Activated CD8-positive, alpha-beta T cell treated with anti-CD3 and anti-CD28 coated beads for 36 hours (primary cell): ENCODE measurements at regions of chr14 and their contacts with region 1.

Region 1: DNA sequence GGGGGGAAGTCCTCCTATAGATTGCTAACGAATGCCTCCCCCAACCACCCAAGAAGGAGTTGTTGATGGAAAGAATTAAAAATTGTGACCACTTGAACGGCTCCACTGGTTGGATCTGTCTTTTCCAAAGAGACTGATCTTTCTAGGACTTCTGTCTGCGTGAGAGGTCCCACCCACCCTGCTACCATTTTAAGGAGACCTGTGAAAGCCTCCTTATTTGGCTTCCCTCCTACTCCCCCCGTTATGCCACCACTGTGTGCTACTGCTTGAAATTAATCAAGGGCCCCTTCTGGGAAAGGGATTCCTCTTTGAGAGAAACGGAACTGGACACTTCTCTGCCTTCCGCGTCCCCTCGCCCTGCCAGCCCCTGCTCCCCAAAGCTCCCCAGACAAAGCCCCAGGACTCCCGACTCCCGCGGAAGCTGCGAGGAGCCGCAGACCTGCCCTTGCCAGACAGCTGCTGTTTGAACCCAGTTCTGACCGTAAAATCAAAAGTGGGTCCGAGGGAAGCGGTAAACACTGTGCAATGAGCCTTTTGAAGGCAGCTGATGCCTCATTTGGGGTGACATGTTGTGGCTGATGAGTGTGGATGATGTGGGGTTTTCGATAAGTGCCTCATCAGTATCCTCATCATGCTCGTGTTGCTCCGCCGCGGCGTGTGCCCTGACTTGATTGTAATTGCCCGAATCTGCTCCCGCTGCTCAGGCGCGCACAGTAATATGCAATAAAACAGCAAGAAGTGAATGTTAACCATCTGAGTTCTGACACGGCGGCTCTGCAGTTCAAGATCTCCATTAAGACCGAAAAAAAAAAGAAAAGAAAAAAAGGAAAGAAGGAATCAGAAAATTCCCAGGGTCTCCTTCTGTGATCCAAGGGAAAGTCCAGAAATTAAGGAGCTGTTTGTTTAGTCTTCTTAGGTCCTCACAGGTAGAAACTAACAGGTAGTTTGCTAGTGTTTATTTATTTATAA is 48.2 kb downstream of the MBIP start:
- DNase-seq: peak; percentile 42
- ATAC-seq: peak; percentile 70
- H3K4me3 Mint-ChIP-seq: peak overlapping the region; percentile 52
- H3K27ac Mint-ChIP-seq: no peak overlapping the region
- H3K4me1 Mint-ChIP-seq: peaks cover 10% of the 10 kb centered on the region
- H3K27me3 Mint-ChIP-seq: peaks cover 46% of the 10 kb centered on the region
- CTCF ChIP-seq: no peak

Region 2: DNA sequence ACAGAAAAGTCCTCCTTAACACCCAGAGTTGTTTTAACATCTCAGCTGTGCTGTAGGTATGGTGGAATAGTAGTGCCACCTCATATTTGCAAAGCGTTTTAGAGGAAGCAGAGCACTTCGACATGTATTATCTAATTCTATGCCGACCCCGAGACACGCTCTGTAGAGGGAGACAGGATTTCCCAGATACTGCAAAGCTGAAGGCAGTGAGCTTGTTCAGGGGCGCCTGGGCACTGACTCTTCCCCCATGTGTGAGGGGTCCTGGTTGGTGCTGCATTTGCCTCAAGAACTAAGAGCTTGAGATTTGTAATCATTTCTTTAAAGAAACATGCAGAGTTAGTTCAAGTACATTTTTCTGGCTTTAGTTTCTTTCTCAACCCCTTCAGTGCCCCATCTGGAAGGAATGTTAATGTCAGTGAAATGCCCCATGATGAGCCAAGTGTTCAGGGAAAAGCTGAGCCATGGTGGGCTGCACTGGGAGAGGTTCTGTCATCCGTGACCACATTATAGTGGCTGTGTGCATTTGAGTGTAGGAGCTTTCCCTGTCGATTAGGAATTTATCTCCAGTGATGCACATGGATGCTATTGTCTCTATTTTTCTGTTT is 18.1 kb before region 1 on chr14:
- CTCF ChIA-PET with region 1: no interaction called
- POLR2A ChIA-PET with region 1: no interaction called
- intact Hi-C with region 1: no loop called
- DNase-seq: no peak
- ATAC-seq: no peak
- H3K4me3 Mint-ChIP-seq: no peak overlapping the region
- H3K27ac Mint-ChIP-seq: no peak overlapping the region
- H3K4me1 Mint-ChIP-seq: no peaks in the 10 kb centered on the region
- H3K27me3 Mint-ChIP-seq: peaks cover 4% of the 10 kb centered on the region
- CTCF ChIP-seq: no peak

Region 3: DNA sequence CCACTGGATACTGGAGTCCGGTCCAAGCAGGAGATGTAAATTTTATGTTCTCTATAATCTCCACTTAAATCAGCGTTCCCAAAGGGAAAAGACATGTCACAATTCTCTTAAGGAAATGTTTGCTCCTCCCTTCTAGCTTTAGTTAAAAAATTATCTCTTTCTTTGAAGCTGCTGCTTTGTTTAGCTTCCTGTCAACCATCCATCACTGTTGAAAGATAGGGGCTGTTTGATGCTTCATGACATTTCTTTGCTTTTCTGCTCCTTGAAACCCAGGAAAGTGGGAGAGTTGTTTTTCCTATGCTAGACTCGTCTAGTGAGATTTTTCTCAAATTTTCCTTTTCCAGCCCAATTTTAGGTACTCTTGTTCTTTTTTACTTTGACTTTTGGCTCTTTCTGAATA is 16.3 kb after region 1 on chr14:
- CTCF ChIA-PET with region 1: no interaction called
- POLR2A ChIA-PET with region 1: no interaction called
- intact Hi-C with region 1: no loop called
- DNase-seq: no peak
- ATAC-seq: no peak
- H3K4me3 Mint-ChIP-seq: no peak overlapping the region
- H3K27ac Mint-ChIP-seq: no peak overlapping the region
- H3K4me1 Mint-ChIP-seq: no peaks in the 10 kb centered on the region
- H3K27me3 Mint-ChIP-seq: peaks cover 5% of the 10 kb centered on the region
- CTCF ChIP-seq: no peak

Region 4: DNA sequence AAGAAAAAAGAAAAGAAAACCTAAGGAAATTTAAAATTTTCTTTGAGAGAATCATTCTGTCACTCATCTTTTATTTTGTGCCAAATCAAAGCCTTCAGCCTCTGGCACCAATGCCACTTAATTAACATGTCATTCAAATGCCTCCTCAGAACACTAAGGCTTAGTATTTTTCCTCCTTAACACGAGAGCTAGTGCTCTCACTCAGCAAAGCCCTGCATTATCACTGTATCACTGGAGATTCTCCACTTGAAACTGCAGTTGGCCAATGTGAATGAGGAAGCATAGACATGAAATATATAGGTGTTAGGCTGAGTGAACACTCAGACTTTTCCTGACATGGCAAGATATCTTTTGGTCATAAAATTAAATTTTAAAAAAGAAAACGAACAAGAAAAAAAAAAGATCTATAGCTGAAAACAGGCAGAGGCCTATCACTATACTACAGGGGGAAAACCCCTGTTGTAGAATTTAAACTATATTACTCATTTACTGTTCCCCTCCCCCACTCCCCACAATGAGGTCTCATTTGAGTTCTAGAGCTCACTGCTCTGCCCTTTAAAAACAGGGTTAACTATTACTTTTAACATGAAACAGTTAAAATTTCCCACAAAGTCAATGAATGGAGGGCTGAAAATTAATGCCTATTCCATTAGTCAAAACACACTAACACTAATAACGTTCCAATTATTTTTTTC is 43.1 kb after region 1 on chr14:
- CTCF ChIA-PET with region 1: no interaction called
- POLR2A ChIA-PET with region 1: no interaction called
- intact Hi-C with region 1: loop called (anchors 5 kb)
- DNase-seq: peak; percentile 83
- ATAC-seq: peak; percentile 85
- H3K4me3 Mint-ChIP-seq: peak overlapping the region; percentile 33
- H3K27ac Mint-ChIP-seq: peak overlapping the region; percentile 96
- H3K4me1 Mint-ChIP-seq: peaks cover 43% of the 10 kb centered on the region
- H3K27me3 Mint-ChIP-seq: no peaks in the 10 kb centered on the region
- CTCF ChIP-seq: no peak

Region 5: DNA sequence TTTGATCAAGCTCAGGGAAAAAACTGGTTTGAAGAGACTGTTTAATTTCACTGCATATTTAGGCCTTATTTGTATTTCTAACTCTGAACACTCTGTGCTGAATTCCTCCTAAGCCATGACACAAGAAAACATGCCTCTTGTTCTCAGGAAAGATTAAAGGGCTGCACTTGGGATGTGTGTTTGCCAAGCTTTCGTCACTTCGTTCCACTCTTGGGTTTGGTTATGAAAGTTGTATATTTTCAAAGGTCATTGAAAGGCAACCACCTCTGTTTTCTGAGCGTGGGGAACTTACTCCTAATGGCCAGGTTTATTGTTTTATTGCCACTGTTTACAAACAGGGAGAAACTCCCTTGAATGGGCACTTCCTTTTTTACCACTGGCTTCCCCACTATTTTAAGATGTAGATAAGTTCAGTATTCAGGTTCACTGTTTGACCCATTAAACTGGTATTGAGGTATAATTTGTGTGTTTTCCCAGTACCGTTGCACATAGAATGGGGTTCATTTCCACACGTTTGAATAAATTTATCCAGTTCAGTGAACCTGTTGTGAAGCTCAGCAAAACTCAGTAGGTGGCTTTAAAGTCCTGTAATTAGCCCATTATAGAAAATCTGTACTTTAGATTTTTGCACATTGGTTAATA is 182.5 kb after region 1 on chr14:
- CTCF ChIA-PET with region 1: no interaction called
- POLR2A ChIA-PET with region 1: no interaction called
- intact Hi-C with region 1: no loop called
- DNase-seq: no peak
- ATAC-seq: no peak
- H3K4me3 Mint-ChIP-seq: no peak overlapping the region
- H3K27ac Mint-ChIP-seq: no peak overlapping the region
- H3K4me1 Mint-ChIP-seq: no peaks in the 10 kb centered on the region
- H3K27me3 Mint-ChIP-seq: peaks cover 1% of the 10 kb centered on the region
- CTCF ChIP-seq: no peak